Cardiac septum (tissue), 1 donor: ENCODE measurements at regions of chr2 and their contacts with region 1.

Region 1: DNA sequence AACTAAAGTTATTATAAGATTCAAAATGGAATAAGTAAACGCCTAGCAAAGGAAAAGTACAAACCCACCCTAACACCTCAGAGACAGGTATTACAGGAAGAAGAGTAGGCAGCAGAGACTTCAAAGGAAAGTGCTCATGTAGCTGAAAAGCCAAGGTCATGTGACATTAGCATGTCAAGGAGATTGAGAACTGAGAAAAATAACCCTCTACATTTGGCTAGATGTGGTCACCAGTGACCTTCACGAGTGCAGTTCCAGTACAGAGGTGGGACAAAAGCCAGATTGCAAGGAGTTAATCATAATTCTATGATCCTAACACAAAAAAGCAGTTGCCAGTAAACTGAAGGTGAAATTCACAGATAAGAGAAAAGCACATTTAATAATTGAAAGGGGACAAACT is 252.7 kb downstream of the ZEB2 start:
- DNase-seq: no peak

Region 2: DNA sequence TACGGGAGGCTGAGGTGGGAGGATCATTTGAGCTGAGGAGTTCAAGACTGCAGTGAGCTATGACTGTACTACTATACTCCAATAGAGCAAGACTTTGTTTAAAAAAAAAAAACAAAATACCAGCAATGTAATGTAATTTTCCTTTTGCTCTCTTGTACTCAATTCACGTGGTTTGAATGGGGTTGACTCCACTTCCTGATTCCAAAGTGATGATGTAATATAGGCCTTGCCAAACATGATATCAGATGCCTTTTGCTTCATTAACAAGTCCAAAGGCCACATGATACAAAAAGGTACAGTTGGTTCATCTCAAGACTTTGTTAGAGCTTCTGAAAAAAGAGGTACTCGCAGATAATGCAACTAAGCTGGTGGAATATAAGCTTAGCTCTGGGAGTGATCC is 69.1 kb before region 1 on chr2:
- intact Hi-C with region 1: loop called (anchors 5 kb)
- DNase-seq: no peak

Region 3: DNA sequence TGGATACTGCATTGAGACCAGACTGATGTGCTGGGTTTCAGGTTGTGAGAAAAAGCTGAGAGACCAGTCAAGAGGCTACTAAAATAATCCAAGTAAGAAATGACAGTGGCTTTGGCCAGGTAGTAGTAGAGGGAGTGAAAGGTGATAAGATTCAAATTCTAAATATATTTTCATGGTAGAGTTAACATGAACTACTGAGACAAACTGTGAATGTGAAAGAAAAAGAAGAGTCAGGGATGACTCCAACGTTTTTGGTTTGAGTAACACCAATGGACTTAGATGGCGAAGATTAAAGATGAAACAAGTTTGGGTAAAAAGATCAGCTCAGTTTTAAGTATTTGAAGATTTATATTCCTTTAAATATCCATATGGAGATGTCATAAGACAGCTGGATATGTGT is 43.2 kb after region 1 on chr2:
- intact Hi-C with region 1: no loop called
- DNase-seq: no peak